ENCODE measurements at regions of chr10 and their contacts with region 1.

Region 1: GRCh38 chr10:26881600-26882331 is 21.0 kb upstream of the ABI1 start:
- DNase-seq: peak; percentile 67
- ATAC-seq: peak; percentile 83
- H3K4me3 ChIP-seq: no peak overlapping the region
- H3K27ac ChIP-seq: no peak overlapping the region
- H3K4me1 ChIP-seq: no peaks in the 10 kb centered on the region
- H3K27me3 ChIP-seq: no peaks in the 10 kb centered on the region
- CTCF ChIP-seq: peak; percentile 73

Region 2: DNA sequence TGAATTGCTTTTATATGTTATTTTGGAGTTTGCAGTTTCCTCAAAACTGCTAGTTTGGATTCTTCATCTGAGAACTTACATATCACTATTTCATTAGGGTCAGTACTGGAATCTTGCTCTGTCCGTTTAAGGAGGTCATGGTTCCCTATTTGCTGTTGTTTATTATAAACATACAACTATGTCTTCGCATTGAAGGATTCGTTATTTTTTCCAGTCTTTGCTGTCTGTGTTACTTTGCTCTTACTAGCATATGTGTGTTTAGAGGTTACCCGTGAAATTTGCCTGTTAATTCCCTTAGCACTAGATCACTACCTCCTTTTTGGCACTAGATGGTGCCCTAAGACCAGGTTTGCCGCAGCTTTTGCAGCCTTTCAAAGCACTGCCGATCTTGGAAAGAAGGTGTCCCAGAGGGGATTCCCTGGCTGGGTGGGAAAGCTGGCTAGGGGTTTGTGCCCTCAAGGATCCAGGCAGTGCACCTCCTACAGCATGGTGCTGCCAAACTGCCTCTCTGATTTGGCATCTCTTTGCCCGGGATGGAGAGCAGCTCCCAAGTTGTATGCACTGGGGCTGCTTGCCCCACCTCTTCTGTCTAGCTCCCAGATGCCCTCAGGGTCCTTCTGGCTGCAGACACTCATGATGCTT is 546.7 kb before region 1 on chr10:
- CTCF ChIA-PET with region 1: no interaction called
- POLR2A ChIA-PET with region 1: no interaction called
- intact Hi-C with region 1: loop called (anchors 10 kb)
- DNase-seq: peak; percentile 62
- ATAC-seq: peak; percentile 51
- H3K4me3 ChIP-seq: 0 out of 2 replicates have a peak overlapping the region, but pooled peaks have one; percentile 28
- H3K27ac ChIP-seq: no peak overlapping the region
- H3K4me1 ChIP-seq: no peaks in the 10 kb centered on the region
- H3K27me3 ChIP-seq: peaks cover 16% of the 10 kb centered on the region
- CTCF ChIP-seq: peak; percentile 83

Region 3: GRCh38 chr10:26612151-26612915 is 269.4 kb before region 1 on chr10:
- CTCF ChIA-PET with region 1: no interaction called
- POLR2A ChIA-PET with region 1: no interaction called
- intact Hi-C with region 1: loop called (anchors 2 kb)
- DNase-seq: no peak
- ATAC-seq: no peak
- H3K4me3 ChIP-seq: no peak overlapping the region
- H3K27ac ChIP-seq: no peak overlapping the region
- H3K4me1 ChIP-seq: no peaks in the 10 kb centered on the region
- H3K27me3 ChIP-seq: peaks cover 34% of the 10 kb centered on the region
- CTCF ChIP-seq: no peak

Region 4: DNA sequence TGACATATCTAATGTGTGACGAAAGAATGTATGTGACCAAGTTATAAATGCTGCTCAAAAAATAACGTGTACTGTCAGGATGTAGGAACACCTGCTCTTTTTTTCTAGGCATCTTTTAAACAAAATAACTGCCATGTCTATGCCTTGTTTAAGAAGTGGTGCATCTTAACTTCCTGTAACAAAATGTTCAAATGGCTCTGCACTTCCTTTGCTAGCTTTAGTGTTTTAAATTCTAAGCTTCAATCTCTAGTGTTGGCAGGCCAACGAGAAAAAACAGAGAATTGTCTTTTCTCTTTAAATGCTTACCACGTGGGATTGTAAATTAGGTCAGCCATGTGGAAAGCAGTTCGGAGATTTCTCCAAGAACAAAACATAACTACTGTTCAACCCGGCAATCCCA is 198.8 kb before region 1 on chr10:
- CTCF ChIA-PET with region 1: no interaction called
- POLR2A ChIA-PET with region 1: no interaction called
- intact Hi-C with region 1: loop called (anchors 5 kb)
- DNase-seq: no peak
- ATAC-seq: no peak
- H3K4me3 ChIP-seq: no peak overlapping the region
- H3K27ac ChIP-seq: no peak overlapping the region
- H3K4me1 ChIP-seq: no peaks in the 10 kb centered on the region
- H3K27me3 ChIP-seq: no peaks in the 10 kb centered on the region
- CTCF ChIP-seq: no peak

Region 5: DNA sequence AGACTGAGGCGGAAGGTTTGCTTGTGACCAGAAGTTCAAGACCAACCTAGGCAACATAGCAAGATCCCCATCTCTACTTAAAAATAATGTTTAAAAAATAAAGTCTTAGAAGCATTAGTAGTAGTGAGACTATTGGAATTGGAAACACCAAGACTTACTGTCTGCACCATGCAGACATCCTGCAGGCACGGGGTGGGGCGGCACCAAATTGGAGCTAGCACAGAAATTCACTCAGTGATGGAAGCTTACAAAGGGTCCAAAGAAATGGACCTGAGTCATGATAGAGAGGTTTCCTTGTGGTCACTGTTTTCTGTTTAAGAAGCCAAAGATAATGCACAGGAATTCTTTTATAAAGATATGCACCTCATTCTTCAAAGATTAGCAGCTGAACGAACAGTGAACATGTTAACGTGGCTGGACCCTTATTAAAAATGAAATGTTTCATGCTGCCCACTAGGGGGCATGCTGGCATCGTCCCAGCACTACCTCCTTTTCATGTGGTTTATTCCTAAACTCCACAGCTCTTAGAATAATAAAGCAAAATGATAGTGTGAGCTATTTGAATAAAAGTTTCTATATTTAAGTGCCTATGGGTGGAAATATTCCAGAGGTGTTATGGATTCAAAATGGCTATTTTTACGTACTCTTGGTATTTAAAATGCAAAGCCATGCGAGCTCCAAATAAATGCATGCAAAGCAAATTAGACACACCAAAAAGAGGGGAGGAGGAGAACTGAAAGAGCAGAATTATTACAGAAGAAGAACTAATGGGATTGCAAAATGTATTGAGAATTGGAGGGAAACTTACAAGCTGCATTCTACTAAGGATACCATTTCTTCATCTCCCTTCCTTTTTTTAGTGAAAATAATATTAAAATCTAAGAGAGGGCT is 155.7 kb before region 1 on chr10:
- CTCF ChIA-PET with region 1: interaction called, 12 read pairs
- POLR2A ChIA-PET with region 1: interaction called, 5 read pairs
- intact Hi-C with region 1: loop called (anchors 1 kb)
- DNase-seq: peak; percentile 55
- ATAC-seq: peak; percentile 72
- H3K4me3 ChIP-seq: no peak overlapping the region
- H3K27ac ChIP-seq: 0 out of 2 replicates have a peak overlapping the region, but pooled peaks have one; percentile 9
- H3K4me1 ChIP-seq: peaks cover 11% of the 10 kb centered on the region; the same call in 1 of the 2 replicates
- H3K27me3 ChIP-seq: no peaks in the 10 kb centered on the region
- CTCF ChIP-seq: peak; percentile 82

Region 6: GRCh38 chr10:26860443-26861204 is 21.1 kb before region 1 on chr10 and contains the start of gene ABI1:
- CTCF ChIA-PET with region 1: interaction called, 3 read pairs
- POLR2A ChIA-PET with region 1: no interaction called
- intact Hi-C with region 1: loop called (anchors 1 kb)
- DNase-seq: peak; percentile 96
- ATAC-seq: peak; percentile 85
- H3K4me3 ChIP-seq: peak within 1 kb of the TSS; percentile 97
- H3K27ac ChIP-seq: peak within 1 kb of the TSS; percentile 67
- H3K4me1 ChIP-seq: peaks cover 15% of the 10 kb centered on the region
- H3K27me3 ChIP-seq: no peaks in the 10 kb centered on the region
- CTCF ChIP-seq: no peak
- total RNA-seq, gene ABI1: 20.7 and 25.2 TPM in 2 replicates

Measured in PC-3 (cell line).